ENCODE measurements at regions of chr7 and their contacts with region 1.

Region 1: GRCh38 chr7:51187941-51188340 is 128.7 kb downstream of the COBL start:
- DNase-seq: peak; percentile 50 to 82
- H3K4me3 ChIP-seq: no peak overlapping the region
- H3K27ac ChIP-seq: no peak overlapping the region
- H3K4me1 ChIP-seq: peaks cover 0 to 7% (median 4%) of the 10 kb centered on the region in 4 experiments; a peak in 4 of 7 replicates
- H3K27me3 ChIP-seq: no peaks in the 10 kb centered on the region
- CTCF ChIP-seq: peak; percentile 86 to 97 (median 90)
- EP300 ChIP-seq: no peak
- POLR2A ChIP-seq: no peak
- RAD21 ChIP-seq: peak; percentile 95

Region 2: GRCh38 chr7:50939021-50939420 is 248.9 kb before region 1 on chr7:
- CTCF ChIA-PET with region 1: no interaction called
- POLR2A ChIA-PET with region 1: no interaction called
- DNase-seq: no peak
- H3K4me3 ChIP-seq: no peak overlapping the region
- H3K27ac ChIP-seq: no peak overlapping the region
- H3K4me1 ChIP-seq: no peaks in the 10 kb centered on the region
- H3K27me3 ChIP-seq: no peaks in the 10 kb centered on the region
- CTCF ChIP-seq: no peak
- EP300 ChIP-seq: no peak
- POLR2A ChIP-seq: no peak
- RAD21 ChIP-seq: no peak

Region 3: GRCh38 chr7:51175316-51175991 is 12.5 kb before region 1 on chr7:
- CTCF ChIA-PET with region 1: interaction called, 28 read pairs
- POLR2A ChIA-PET with region 1: no interaction called
- DNase-seq: no peak
- H3K4me3 ChIP-seq: peak overlapping the region in 1 of 4 experiments; percentile 27; a peak in 2 of 8 replicates
- H3K27ac ChIP-seq: peak overlapping the region; percentile 16; the same call in 1 of the 2 replicates
- H3K4me1 ChIP-seq: peaks cover 6 to 17% (median 11%) of the 10 kb centered on the region in 4 experiments; a peak in 5 of 7 replicates
- H3K27me3 ChIP-seq: no peaks in the 10 kb centered on the region
- CTCF ChIP-seq: no peak
- EP300 ChIP-seq: 0 out of 3 replicates have a peak, but pooled peaks of 1 of the 2 experiments have one; percentile 24
- POLR2A ChIP-seq: no peak
- RAD21 ChIP-seq: no peak

Region 4: DNA sequence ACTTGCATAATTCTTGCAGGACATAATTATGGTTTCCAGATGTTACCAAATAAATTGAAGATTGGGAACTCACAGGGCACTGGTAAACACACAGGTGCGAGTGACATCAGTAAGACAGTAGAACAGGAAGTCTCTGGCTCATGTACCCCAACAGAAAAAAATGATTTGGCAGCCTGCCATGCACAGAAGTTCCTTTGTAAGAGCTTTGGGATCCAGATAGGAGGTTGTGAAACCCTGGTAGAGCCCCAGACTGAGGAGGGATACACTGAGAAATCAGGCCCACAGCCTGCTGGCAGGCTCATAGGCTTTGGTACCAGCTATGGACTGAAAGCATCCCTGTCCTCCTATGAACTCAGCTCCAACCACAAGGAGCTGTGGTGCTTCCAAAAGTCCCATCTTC is 10.7 kb after region 1 on chr7:
- CTCF ChIA-PET with region 1: interaction called, 24 read pairs
- POLR2A ChIA-PET with region 1: interaction called, 3 read pairs
- DNase-seq: no peak
- H3K4me3 ChIP-seq: no peak overlapping the region
- H3K27ac ChIP-seq: no peak overlapping the region
- H3K4me1 ChIP-seq: no peaks in the 10 kb centered on the region
- H3K27me3 ChIP-seq: no peaks in the 10 kb centered on the region
- CTCF ChIP-seq: no peak
- EP300 ChIP-seq: no peak
- POLR2A ChIP-seq: no peak
- RAD21 ChIP-seq: no peak

Region 5: DNA sequence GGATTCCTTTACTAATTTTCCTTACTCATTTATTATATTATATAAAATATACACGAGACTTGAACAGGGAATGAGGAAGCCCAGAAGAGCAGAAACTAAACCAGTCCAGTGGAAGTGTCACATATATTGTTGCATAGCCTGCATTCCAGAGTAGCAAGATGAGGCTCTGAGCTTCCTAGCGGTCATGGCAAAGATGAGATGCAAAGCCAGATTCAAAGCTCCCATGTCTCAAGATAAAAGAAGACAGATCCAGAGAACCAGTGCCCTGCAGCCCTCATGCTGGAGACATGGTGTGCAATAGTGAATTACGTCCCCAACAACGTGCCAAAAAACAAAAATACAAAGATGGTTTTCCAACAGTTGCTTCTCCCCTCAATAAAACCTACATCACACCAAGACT is 69.0 kb after region 1 on chr7:
- CTCF ChIA-PET with region 1: no interaction called
- POLR2A ChIA-PET with region 1: no interaction called
- DNase-seq: peak in 1 of 2 experiments; percentile 16
- H3K4me3 ChIP-seq: no peak overlapping the region
- H3K27ac ChIP-seq: no peak overlapping the region
- H3K4me1 ChIP-seq: peaks cover 0 to 10% (median 6%) of the 10 kb centered on the region in 4 experiments; a peak in 5 of 7 replicates
- H3K27me3 ChIP-seq: no peaks in the 10 kb centered on the region
- CTCF ChIP-seq: no peak
- EP300 ChIP-seq: no peak
- POLR2A ChIP-seq: no peak
- RAD21 ChIP-seq: no peak

Region 6: GRCh38 chr7:51357821-51358220 is 169.9 kb after region 1 on chr7:
- CTCF ChIA-PET with region 1: interaction called, 352 read pairs
- POLR2A ChIA-PET with region 1: no interaction called
- DNase-seq: no peak
- H3K4me3 ChIP-seq: no peak overlapping the region
- H3K27ac ChIP-seq: no peak overlapping the region
- H3K4me1 ChIP-seq: peaks cover 0 to 5% (median 0%) of the 10 kb centered on the region in 4 experiments; a peak in 4 of 7 replicates
- H3K27me3 ChIP-seq: no peaks in the 10 kb centered on the region
- CTCF ChIP-seq: no peak
- EP300 ChIP-seq: no peak
- POLR2A ChIP-seq: no peak
- RAD21 ChIP-seq: no peak

Measured in H1 (cell line).